Heart left ventricle (tissue), 16 donors: ENCODE measurements at regions of chr10 and their contacts with region 1.

Region 1: DNA sequence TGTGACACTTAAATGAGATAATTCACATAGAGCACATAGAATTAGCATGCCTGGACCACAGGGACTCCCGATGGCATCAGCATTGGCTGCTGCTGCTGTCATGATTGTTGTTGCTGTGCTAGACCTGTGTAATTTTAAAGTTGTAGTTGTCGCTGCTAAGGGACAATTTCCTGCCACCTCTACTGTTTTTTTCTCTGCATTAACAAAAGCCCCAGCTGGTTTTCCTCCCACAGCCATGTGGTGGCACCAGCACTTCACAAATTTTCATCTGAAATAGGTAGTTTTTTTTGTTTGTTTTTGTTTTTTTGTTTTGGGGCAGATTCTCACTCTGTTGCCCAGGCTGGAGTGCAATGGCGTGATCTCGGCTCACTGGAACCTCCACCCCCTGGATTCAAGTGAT is 25.4 kb upstream of the PRXL2A start:
- DNase-seq: peak in 4 of 5 donors; percentile 22 to 44 (median 28)
- ATAC-seq: peak in 1 of 4 donors; percentile 36
- H3K4me3 ChIP-seq: no peak overlapping the region
- H3K27ac ChIP-seq: no peak overlapping the region
- H3K4me1 ChIP-seq: peaks cover 0 to 14% (median 0%) of the 10 kb centered on the region in 12 donors
- H3K27me3 ChIP-seq: no peaks in the 10 kb centered on the region
- CTCF ChIP-seq: peak; percentile 57 to 79 (median 72)
- POLR2A ChIP-seq: no peak

Region 2: DNA sequence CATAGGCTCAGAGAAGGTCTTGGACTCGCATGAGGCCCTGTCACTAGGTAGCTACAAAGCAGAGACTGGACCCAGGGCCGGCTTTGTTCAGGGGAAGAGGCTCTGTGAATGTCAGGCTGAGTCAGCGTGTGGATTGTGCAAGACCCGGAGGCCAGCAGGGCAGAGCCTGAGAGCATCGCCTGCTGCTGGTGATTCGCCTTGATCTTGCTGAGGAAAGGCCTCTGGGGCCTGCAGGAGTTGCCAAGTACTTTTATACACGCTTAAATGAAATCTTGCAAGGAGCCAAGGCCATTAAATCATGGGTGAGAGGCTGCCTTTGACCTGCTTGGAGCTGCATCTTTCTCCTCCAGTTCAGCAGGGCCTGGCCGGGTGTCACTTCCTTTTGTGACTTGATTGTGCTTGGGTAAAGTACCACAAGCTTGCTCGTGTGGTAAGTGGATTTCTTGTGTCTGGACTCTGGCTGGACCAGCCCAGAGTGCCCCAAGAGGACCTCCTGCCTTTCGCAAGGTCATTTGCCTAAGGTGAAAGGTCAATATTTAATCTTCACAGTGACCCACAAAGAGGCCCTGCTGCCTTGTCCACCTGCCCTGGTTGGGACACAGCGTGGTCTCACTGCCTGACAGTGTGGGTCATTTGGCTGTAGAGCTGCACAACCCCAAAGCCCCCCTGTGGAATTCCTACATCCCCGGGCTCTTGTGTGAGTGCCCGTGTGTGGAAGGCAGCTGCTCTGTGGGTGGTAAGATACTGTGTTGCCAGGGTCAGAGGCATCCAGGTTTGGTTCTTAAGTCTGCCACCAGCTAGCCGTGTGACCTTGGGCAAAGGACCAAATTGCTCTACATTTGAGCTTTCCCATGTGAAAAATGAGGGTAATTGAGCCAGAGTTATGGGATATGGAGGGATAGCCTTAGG is 116.1 kb after region 1 on chr10:
- intact Hi-C with region 1: loop called in 6 of 10 experiments (anchors 2 to 10 kb)
- DNase-seq: peak; percentile 81 to 97 (median 94)
- ATAC-seq: peak; percentile 82 to 95 (median 89)
- H3K4me3 ChIP-seq: peak overlapping the region in 1 of 12 donors; percentile 18
- H3K27ac ChIP-seq: peak overlapping the region; percentile 69 to 95 (median 80)
- H3K4me1 ChIP-seq: peaks cover 54 to 99% (median 86%) of the 10 kb centered on the region in 12 donors
- H3K27me3 ChIP-seq: no peaks in the 10 kb centered on the region
- CTCF ChIP-seq: no peak
- POLR2A ChIP-seq: peak in 1 of 2 donors; percentile 9

Region 3: GRCh38 chr10:80504158-80504811 is 121.3 kb after region 1 on chr10:
- intact Hi-C with region 1: loop called (anchors 2 to 10 kb)
- DNase-seq: peak in 1 of 5 donors; percentile 23
- ATAC-seq: peak in 3 of 4 donors; percentile 7 to 37 (median 34)
- H3K4me3 ChIP-seq: no peak overlapping the region
- H3K27ac ChIP-seq: peak overlapping the region; percentile 19 to 95 (median 79)
- H3K4me1 ChIP-seq: peaks cover 34 to 100% (median 92%) of the 10 kb centered on the region in 12 donors
- H3K27me3 ChIP-seq: no peaks in the 10 kb centered on the region
- CTCF ChIP-seq: no peak
- POLR2A ChIP-seq: no peak

Region 4: DNA sequence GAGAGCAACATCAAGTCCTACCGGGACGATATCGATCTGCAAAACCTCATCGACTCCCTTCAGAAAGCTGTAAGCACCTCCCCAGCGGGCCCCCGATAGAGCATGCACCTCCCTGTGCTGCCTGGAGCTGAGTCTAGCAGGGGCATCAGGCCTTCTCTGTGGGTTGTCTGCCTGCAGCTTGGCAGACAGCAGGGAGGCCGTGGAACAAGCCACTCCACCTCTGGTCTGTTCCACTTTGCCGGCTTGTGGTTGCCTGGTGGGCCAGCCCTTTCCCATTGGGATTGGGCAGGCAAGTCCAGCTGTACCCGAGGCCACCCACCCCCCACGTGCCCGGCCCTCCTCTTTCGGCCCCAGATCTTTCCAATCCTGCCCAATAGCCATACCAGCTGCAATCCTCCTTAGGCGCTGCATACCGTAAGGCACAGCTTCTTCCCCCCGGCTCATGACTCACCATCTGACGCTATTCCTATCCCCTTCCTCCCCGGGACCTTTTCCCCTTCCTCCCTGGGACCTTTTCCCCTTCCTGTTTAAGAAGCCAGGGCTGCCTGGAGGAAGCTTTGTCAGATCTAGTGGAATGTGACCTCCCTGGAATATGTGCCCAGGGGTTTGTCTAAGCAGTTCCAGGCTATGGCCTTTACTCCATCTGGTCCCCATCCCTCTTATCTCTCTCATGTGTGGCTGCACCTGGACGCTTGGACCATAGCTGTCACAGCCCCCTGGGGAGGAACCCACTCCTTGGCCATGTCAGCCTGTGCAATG is 126.6 kb after region 1 on chr10:
- intact Hi-C with region 1: loop called (anchors 2 to 10 kb)
- DNase-seq: peak in 4 of 5 donors; percentile 55 to 75 (median 72)
- ATAC-seq: peak; percentile 49 to 86 (median 72)
- H3K4me3 ChIP-seq: no peak overlapping the region
- H3K27ac ChIP-seq: peak overlapping the region; percentile 46 to 95 (median 80)
- H3K4me1 ChIP-seq: peaks cover 9 to 71% (median 60%) of the 10 kb centered on the region in 12 donors
- H3K27me3 ChIP-seq: no peaks in the 10 kb centered on the region
- CTCF ChIP-seq: no peak
- POLR2A ChIP-seq: no peak

Region 5: GRCh38 chr10:80662577-80663261 is 279.7 kb after region 1 on chr10:
- intact Hi-C with region 1: loop called in 1 of 10 experiments (anchors 10 kb)
- DNase-seq: peak; percentile 78 to 89 (median 81)
- ATAC-seq: peak; percentile 72 to 88 (median 86)
- H3K4me3 ChIP-seq: peak overlapping the region in 10 of 12 donors; percentile 12 to 53 (median 42)
- H3K27ac ChIP-seq: peak overlapping the region in 11 of 12 donors; percentile 31 to 80 (median 70)
- H3K4me1 ChIP-seq: peaks cover 0 to 38% (median 6%) of the 10 kb centered on the region in 12 donors
- H3K27me3 ChIP-seq: no peaks in the 10 kb centered on the region
- CTCF ChIP-seq: peak; percentile 78 to 95 (median 88)
- POLR2A ChIP-seq: peak in 1 of 2 donors; percentile 11

Region 6: GRCh38 chr10:80924063-80924952 is 541.3 kb after region 1 on chr10:
- intact Hi-C with region 1: loop called in 8 of 10 experiments (anchors 5 to 10 kb)
- DNase-seq: peak in 3 of 5 donors; percentile 27 to 43 (median 32)
- ATAC-seq: peak in 2 of 4 donors; percentile 36 to 49
- H3K4me3 ChIP-seq: no peak overlapping the region
- H3K27ac ChIP-seq: no peak overlapping the region
- H3K4me1 ChIP-seq: no peaks in the 10 kb centered on the region
- H3K27me3 ChIP-seq: peaks cover 0 to 8% (median 0%) of the 10 kb centered on the region in 9 donors
- CTCF ChIP-seq: peak; percentile 60 to 83 (median 67)
- POLR2A ChIP-seq: no peak

Region 7: GRCh38 chr10:81018708-81019365 is 635.8 kb after region 1 on chr10:
- intact Hi-C with region 1: loop called in 1 of 10 experiments (anchors 10 kb)
- DNase-seq: no peak
- ATAC-seq: peak in 2 of 4 donors; percentile 14 to 56
- H3K4me3 ChIP-seq: no peak overlapping the region
- H3K27ac ChIP-seq: no peak overlapping the region
- H3K4me1 ChIP-seq: no peaks in the 10 kb centered on the region
- H3K27me3 ChIP-seq: no peaks in the 10 kb centered on the region
- CTCF ChIP-seq: peak; percentile 41 to 69 (median 54)
- POLR2A ChIP-seq: no peak